ENCODE measurements at regions of chr9 and their contacts with region 1.

Region 1: GRCh38 chr9:34328987-34329832 is at the starts of genes KIF24 and NUDT2:
- DNase-seq: peak; percentile 88
- ATAC-seq: peak; percentile 91
- H3K4me3 Mint-ChIP-seq: peak within 1 kb of the TSS; percentile 92
- H3K27ac Mint-ChIP-seq: peak within 1 kb of the TSS; percentile 96
- H3K4me1 Mint-ChIP-seq: peaks cover 38% of the 10 kb centered on the region
- H3K27me3 Mint-ChIP-seq: no peaks in the 10 kb centered on the region
- CTCF ChIP-seq: no peak
- total RNA-seq, gene KIF24: 0.69 and 0.71 TPM in 2 replicates
- total RNA-seq, gene NUDT2: 19.2 and 19.7 TPM in 2 replicates

Region 2: GRCh38 chr9:33816327-33817252 is 512.6 kb before region 1 on chr9 and contains the start of gene UBE2R2:
- CTCF ChIA-PET with region 1: no interaction called
- POLR2A ChIA-PET with region 1: interaction called, 4 read pairs
- intact Hi-C with region 1: loop called (anchors 1 kb)
- DNase-seq: peak; percentile 79
- ATAC-seq: peak; percentile 72
- H3K4me3 Mint-ChIP-seq: peak within 1 kb of the TSS; percentile 90
- H3K27ac Mint-ChIP-seq: peak within 1 kb of the TSS; percentile 98
- H3K4me1 Mint-ChIP-seq: peaks cover 61% of the 10 kb centered on the region
- H3K27me3 Mint-ChIP-seq: no peaks in the 10 kb centered on the region
- CTCF ChIP-seq: no peak
- total RNA-seq, gene UBE2R2: 28.5 and 28.9 TPM in 2 replicates

Region 3: GRCh38 chr9:34178520-34179212 is 150.5 kb before region 1 on chr9 and contains the start of gene UBAP1:
- CTCF ChIA-PET with region 1: no interaction called
- POLR2A ChIA-PET with region 1: no interaction called
- intact Hi-C with region 1: loop called (anchors 2 kb)
- DNase-seq: peak; percentile 88
- ATAC-seq: peak; percentile 97
- H3K4me3 Mint-ChIP-seq: peak within 1 kb of the TSS; percentile 99
- H3K27ac Mint-ChIP-seq: peak within 1 kb of the TSS; percentile 96
- H3K4me1 Mint-ChIP-seq: peaks cover 20% of the 10 kb centered on the region
- H3K27me3 Mint-ChIP-seq: no peaks in the 10 kb centered on the region
- CTCF ChIP-seq: no peak
- total RNA-seq, gene UBAP1: 28.3 and 30.6 TPM in 2 replicates

Region 4: DNA sequence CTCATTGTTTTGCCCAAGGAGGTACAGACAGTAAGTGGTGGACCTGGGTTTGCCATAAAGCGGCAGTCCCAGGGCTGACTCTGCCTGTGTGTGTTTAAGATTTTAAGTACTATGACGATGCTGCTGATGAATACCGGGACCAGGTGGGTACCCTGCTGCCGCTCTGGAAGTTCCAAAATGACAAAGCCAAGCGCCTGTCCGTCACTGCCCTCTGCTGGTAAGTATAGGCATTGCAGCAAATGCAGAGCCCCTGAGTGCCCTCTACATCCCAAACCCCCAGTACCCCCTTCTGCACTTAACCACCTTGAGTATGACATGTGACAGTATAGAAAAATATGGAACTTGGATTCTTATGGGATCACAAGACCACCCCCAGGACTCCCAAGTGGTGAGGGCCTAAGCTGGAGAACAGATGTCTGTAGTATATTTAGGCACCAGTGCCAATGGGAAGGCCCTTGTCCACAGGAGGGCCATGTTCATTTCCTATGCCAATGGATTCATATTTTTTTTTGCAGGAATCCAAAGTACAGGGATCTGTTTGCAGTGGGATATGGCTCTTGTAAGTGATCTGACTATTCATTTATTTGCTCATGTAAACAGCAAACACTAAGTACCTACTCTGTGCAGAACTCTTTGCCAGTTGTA is 171.5 kb after region 1 on chr9:
- CTCF ChIA-PET with region 1: interaction called, 11 read pairs
- POLR2A ChIA-PET with region 1: no interaction called
- intact Hi-C with region 1: loop called (anchors 1 kb)
- DNase-seq: peak; percentile 55
- ATAC-seq: peak; percentile 95
- H3K4me3 Mint-ChIP-seq: no peak overlapping the region
- H3K27ac Mint-ChIP-seq: no peak overlapping the region
- H3K4me1 Mint-ChIP-seq: no peaks in the 10 kb centered on the region
- H3K27me3 Mint-ChIP-seq: peaks cover 13% of the 10 kb centered on the region
- CTCF ChIP-seq: peak; percentile 75

Region 5: DNA sequence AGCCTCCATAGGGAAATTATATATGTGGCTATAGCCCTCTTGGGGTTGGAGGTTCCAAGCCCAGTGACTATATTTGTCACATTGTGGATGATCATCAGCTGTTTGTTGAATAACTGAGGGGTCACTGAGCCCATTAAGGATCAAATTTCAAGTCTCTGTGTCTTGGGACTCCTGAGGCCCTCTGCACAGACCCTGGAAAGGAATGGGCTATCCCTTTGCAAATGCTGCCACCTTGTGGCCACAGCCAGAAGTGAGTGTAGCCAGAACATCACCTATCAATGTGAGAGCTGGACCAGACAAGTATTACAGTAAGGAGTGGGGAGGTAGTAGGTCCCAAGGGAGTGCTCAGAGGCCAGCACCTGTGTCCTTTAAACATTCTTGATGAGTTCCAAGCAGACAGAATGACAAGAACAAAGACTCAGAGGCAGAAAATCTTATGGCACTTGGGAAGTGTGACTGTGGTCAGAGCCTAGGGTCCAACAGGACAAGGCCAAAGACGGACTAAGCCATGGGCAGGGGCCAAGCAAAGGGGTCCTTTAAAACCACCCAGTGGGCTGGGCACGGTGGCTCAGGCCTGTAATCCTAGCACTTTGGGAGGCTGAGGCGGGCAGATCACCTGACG is 274.5 kb after region 1 on chr9:
- CTCF ChIA-PET with region 1: interaction called, 8 read pairs
- POLR2A ChIA-PET with region 1: no interaction called
- intact Hi-C with region 1: loop called (anchors 1 kb)
- DNase-seq: peak; percentile 75
- ATAC-seq: peak; percentile 97
- H3K4me3 Mint-ChIP-seq: no peak overlapping the region
- H3K27ac Mint-ChIP-seq: no peak overlapping the region
- H3K4me1 Mint-ChIP-seq: no peaks in the 10 kb centered on the region
- H3K27me3 Mint-ChIP-seq: peaks cover 9% of the 10 kb centered on the region
- CTCF ChIP-seq: peak; percentile 52

Region 6: GRCh38 chr9:34665381-34666250 is 336.4 kb after region 1 on chr9:
- CTCF ChIA-PET with region 1: no interaction called
- POLR2A ChIA-PET with region 1: no interaction called
- intact Hi-C with region 1: loop called (anchors 1 kb)
- DNase-seq: peak; percentile 75
- ATAC-seq: peak; percentile 90
- H3K4me3 Mint-ChIP-seq: peak overlapping the region; percentile 88
- H3K27ac Mint-ChIP-seq: peak overlapping the region; percentile 87
- H3K4me1 Mint-ChIP-seq: peaks cover 11% of the 10 kb centered on the region
- H3K27me3 Mint-ChIP-seq: no peaks in the 10 kb centered on the region
- CTCF ChIP-seq: no peak